MCF 10A (cell line): ENCODE measurements at regions of chr10 and their contacts with region 1.

Region 1: GRCh38 chr10:118800920-118801319 is 46.1 kb upstream of the CACUL1 start:
- DNase-seq: peak; percentile 55
- H3K4me3 Mint-ChIP-seq: no peak overlapping the region
- H3K27ac Mint-ChIP-seq: no peak overlapping the region
- H3K4me1 Mint-ChIP-seq: peaks cover 29% of the 10 kb centered on the region
- H3K27me3 Mint-ChIP-seq: no peaks in the 10 kb centered on the region
- CTCF ChIP-seq: peak; percentile 69

Region 2: GRCh38 chr10:118504044-118504874 is 296.7 kb before region 1 on chr10:
- CTCF ChIA-PET with region 1: no interaction called
- POLR2A ChIA-PET with region 1: no interaction called
- intact Hi-C with region 1: loop called (anchors 1 kb)
- DNase-seq: peak; percentile 97
- H3K4me3 Mint-ChIP-seq: peak overlapping the region; percentile 55
- H3K27ac Mint-ChIP-seq: peak overlapping the region; percentile 96
- H3K4me1 Mint-ChIP-seq: peaks cover 50% of the 10 kb centered on the region
- H3K27me3 Mint-ChIP-seq: no peaks in the 10 kb centered on the region
- CTCF ChIP-seq: no peak

Region 3: GRCh38 chr10:118720685-118721538 is 80.0 kb before region 1 on chr10:
- CTCF ChIA-PET with region 1: interaction called, 12 read pairs
- POLR2A ChIA-PET with region 1: no interaction called
- intact Hi-C with region 1: loop called (anchors 2 kb)
- DNase-seq: peak; percentile 72
- H3K4me3 Mint-ChIP-seq: no peak overlapping the region
- H3K27ac Mint-ChIP-seq: no peak overlapping the region
- H3K4me1 Mint-ChIP-seq: peaks cover 8% of the 10 kb centered on the region
- H3K27me3 Mint-ChIP-seq: no peaks in the 10 kb centered on the region
- CTCF ChIP-seq: peak; percentile 56

Region 4: DNA sequence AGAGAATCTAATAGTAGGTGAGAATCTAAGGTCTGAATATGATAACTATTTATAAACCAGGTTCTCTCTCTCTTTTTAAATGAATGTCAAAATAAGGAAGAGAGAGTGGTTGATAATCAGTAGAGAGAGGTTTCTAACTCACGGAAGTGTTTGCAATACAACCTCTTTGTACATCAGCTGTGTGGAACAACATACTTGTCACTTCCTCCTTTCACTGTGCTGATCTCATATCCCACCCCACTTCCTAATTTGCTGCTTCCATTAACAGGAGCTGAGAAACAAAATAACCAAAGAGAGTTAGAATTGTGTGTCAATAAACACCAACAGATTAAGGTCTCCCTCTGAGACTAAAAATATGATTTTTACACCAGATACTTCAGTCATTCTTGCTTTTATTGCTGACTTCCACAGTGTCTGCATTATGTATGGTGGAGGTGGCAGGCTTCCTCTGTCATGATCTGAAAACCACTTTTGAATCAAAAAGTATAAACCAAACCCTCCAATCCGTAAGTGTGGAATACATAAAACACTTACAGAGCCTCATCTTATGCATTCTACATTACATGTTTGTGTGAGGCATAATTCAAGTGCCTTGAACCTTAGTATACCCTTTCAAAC is 71.2 kb before region 1 on chr10:
- CTCF ChIA-PET with region 1: interaction called, 19 read pairs
- POLR2A ChIA-PET with region 1: interaction called, 7 read pairs
- intact Hi-C with region 1: no loop called
- DNase-seq: no peak
- H3K4me3 Mint-ChIP-seq: no peak overlapping the region
- H3K27ac Mint-ChIP-seq: no peak overlapping the region
- H3K4me1 Mint-ChIP-seq: peaks cover 48% of the 10 kb centered on the region
- H3K27me3 Mint-ChIP-seq: no peaks in the 10 kb centered on the region
- CTCF ChIP-seq: no peak

Region 5: GRCh38 chr10:119006451-119007210 is 205.7 kb after region 1 on chr10:
- CTCF ChIA-PET with region 1: no interaction called
- POLR2A ChIA-PET with region 1: interaction called, 13 read pairs
- intact Hi-C with region 1: no loop called
- DNase-seq: peak; percentile 98
- H3K4me3 Mint-ChIP-seq: no peak overlapping the region
- H3K27ac Mint-ChIP-seq: peak overlapping the region; percentile 46
- H3K4me1 Mint-ChIP-seq: peaks cover 30% of the 10 kb centered on the region
- H3K27me3 Mint-ChIP-seq: no peaks in the 10 kb centered on the region
- CTCF ChIP-seq: no peak